Right cardiac atrium (tissue), 5 donors: ENCODE measurements at regions of chr14 and their contacts with region 1.

Region 1: GRCh38 chr14:68621400-68622365 is 171.2 kb downstream of the ZFP36L1 start:
- DNase-seq: peak; percentile 81 to 88 (median 84)
- ATAC-seq: peak; percentile 77 to 84
- H3K4me3 ChIP-seq: no peak overlapping the region
- H3K27ac ChIP-seq: peak overlapping the region; percentile 87
- H3K4me1 ChIP-seq: peaks cover 13% of the 10 kb centered on the region
- H3K27me3 ChIP-seq: no peaks in the 10 kb centered on the region

Region 2: GRCh38 chr14:68548194-68549056 is 73.3 kb before region 1 on chr14:
- intact Hi-C with region 1: loop called in 1 of 4 experiments (anchors 5 kb)
- DNase-seq: peak; percentile 93 to 96 (median 95)
- ATAC-seq: peak; percentile 92 to 93
- H3K4me3 ChIP-seq: no peak overlapping the region
- H3K27ac ChIP-seq: peak overlapping the region; percentile 98
- H3K4me1 ChIP-seq: peaks cover 40% of the 10 kb centered on the region
- H3K27me3 ChIP-seq: no peaks in the 10 kb centered on the region

Region 3: DNA sequence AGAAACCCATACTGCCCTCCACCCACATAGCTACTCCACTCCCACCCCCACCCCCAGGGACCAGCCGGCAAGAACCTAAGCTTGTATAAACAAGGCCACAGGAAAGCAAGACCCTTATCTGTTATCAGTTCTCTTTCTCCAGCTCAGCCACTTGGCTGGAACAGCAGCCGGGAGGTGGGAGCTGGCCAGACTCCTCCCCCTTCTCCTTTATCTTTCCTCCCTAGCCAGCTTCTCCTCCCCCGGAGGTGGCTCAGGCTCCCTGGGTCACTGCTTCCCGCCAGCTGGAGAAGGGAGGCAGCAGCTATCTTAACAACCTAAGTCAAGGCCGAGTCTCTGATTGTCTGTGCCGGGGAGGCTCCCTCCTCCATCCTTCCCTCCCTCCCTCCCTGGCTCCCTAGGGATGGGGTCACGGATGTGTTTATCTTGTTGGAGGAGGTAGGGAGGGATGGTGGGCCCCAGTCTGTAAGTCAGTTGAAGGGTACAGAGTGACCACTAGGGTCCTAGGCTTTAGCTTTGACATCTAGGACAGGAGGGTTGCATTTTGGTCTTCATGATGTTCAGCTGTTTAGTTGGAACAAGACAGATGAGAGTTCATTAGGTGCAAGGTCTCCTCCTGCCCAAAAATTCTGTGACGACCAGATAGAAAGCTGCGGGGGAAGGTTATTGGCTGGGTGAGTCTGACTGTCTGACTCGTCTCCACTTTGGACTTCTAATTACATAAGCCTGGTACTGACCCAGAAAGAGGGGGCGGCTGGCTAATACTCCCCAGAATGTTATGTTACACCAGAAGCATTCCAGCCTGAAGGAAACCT is 141.5 kb after region 1 on chr14:
- intact Hi-C with region 1: no loop called
- DNase-seq: peak; percentile 87 to 95 (median 95)
- ATAC-seq: peak; percentile 95
- H3K4me3 ChIP-seq: no peak overlapping the region
- H3K27ac ChIP-seq: peak overlapping the region; percentile 85
- H3K4me1 ChIP-seq: peaks cover 18% of the 10 kb centered on the region
- H3K27me3 ChIP-seq: no peaks in the 10 kb centered on the region